ENCODE measurements at regions of chr3 and their contacts with region 1.

Region 1: DNA sequence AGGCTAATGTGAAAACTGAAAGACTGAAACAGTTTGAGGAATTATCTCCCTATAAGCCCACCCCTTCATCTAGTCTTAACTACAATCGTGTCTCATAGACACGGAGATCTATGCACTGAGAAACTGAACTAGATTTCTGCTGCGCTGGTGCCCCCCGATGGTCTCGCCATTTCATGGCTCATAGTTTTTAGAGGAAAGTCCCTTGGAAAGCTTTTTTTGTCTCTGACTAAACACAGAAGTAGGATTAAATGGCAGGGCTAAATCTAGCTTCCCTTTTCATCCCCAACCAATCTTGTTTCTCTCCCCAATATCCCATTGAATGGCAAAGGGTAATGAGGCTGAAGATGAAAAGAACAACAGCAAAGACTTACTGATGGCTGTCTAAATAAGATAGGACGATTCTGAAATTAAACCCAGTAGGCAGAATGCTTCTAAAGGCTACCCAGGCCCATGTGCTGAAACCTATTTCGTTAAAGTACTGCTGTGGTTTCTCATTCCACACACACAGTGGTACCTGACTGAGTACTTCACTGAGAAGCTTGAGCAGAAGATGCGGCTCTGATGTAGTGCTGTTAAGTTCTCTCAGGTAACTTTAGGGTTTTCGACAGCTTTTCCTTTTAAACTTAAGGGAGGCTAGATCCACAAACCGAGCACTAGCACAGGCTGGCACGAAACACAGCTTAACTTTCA is 142.7 kb downstream of the GADL1 start:
- DNase-seq: peak in 2 of 10 donors; percentile 42
- H3K4me3 ChIP-seq: no peak overlapping the region
- H3K27ac ChIP-seq: no peak overlapping the region
- H3K27me3 ChIP-seq: peaks cover 0 to 7% (median 0%) of the 10 kb centered on the region in 45 donors
- CTCF ChIP-seq: peak in 41 of 56 donors; percentile 10 to 59 (median 37)

Region 2: GRCh38 chr3:30012941-30013543 is 738.7 kb before region 1 on chr3:
- intact Hi-C with region 1: loop called in 1 of 2 experiments (anchors 10 kb)
- DNase-seq: peak in 7 of 10 donors; percentile 24 to 78 (median 47)
- H3K4me3 ChIP-seq: no peak overlapping the region
- H3K27ac ChIP-seq: no peak overlapping the region
- H3K27me3 ChIP-seq: peaks cover 0 to 4% (median 0%) of the 10 kb centered on the region in 45 donors
- CTCF ChIP-seq: peak; percentile 50 to 85 (median 72)

Region 3: GRCh38 chr3:31253782-31254181 is 502.0 kb after region 1 on chr3:
- intact Hi-C with region 1: no loop called
- DNase-seq: no peak
- H3K4me3 ChIP-seq: no peak overlapping the region
- H3K27ac ChIP-seq: no peak overlapping the region
- H3K27me3 ChIP-seq: no peaks in the 10 kb centered on the region
- CTCF ChIP-seq: no peak

Measured in dorsolateral prefrontal cortex (tissue), 120 donors.